SK-N-SH (cell line): ENCODE measurements at regions of chr1 and their contacts with region 1.

Region 1: GRCh38 chr1:5975133-5975880 is 16.9 kb downstream of the NPHP4 start:
- DNase-seq: peak; percentile 84
- H3K4me3 ChIP-seq: peak overlapping the region in 1 of 2 experiments; percentile 39; a peak in 1 of 4 replicates
- H3K27ac ChIP-seq: no peak overlapping the region
- H3K4me1 ChIP-seq: peaks cover 0 to 21% of the 10 kb centered on the region in 2 experiments; a peak in 1 of 4 replicates
- H3K27me3 ChIP-seq: no peaks in the 10 kb centered on the region
- CTCF ChIP-seq: peak; percentile 71
- EP300 ChIP-seq: no peak
- RAD21 ChIP-seq: peak; percentile 96

Region 2: GRCh38 chr1:5956022-5956830 is 19.1 kb before region 1 on chr1:
- CTCF ChIA-PET with region 1: interaction called, 12 read pairs
- POLR2A ChIA-PET with region 1: no interaction called
- DNase-seq: no peak
- H3K4me3 ChIP-seq: no peak overlapping the region
- H3K27ac ChIP-seq: no peak overlapping the region
- H3K4me1 ChIP-seq: peaks cover 0 to 7% of the 10 kb centered on the region in 2 experiments; a peak in 1 of 4 replicates
- H3K27me3 ChIP-seq: no peaks in the 10 kb centered on the region
- CTCF ChIP-seq: no peak
- EP300 ChIP-seq: no peak
- RAD21 ChIP-seq: no peak